Gastrocnemius medialis (tissue), 4 donors: ENCODE measurements at regions of chr2 and their contacts with region 1.

Region 1: DNA sequence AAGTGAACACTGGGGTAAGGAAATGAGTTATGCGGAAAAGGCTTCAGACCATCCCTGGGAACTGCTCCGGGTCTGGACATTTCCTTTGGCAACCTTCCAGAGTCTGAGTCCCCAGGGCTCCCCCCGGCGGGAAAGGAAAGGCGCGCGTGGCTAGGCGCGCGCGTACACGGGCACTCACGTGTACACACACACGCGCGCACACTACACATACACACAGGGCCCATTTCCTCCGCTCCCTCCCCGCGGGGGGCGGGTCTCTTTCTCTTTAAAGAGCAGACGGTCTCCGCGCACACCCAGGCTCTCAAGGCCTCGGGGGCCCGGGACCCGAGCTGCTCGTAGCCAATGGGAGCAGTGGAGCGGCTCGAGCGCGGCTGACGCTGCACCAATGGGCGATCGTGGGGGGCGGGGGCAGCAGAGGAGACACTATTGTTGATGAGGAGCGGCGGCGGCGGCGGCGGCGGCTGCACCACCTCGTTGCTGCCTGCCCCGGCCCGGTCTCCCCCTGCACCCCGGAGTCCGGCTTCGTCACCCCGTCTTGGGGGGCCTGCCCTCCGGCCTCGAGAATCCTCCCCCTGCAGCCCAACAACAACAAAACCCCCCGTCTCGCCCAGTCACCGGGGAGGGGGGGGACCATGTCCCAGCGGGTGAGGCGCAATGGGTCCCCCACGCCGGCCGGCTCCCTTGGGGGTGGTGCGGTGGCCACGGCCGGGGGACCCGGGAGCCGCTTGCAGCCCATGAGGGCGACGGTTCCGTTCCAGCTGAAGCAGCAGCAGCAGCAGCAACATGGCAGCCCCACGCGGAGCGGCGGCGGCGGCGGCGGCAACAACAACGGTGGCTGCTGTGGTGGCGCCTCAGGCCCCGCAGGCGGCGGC is at the start of gene FAM117B:
- DNase-seq: peak; percentile 97
- ATAC-seq: peak; percentile 91 to 93
- H3K4me3 ChIP-seq: peak within 1 kb of the TSS; percentile 95 to 99 (median 97)
- H3K27ac ChIP-seq: peak within 1 kb of the TSS; percentile 94 to 99 (median 97)
- H3K4me1 ChIP-seq: peaks cover 20 to 30% of the 10 kb centered on the region in 2 donors
- H3K27me3 ChIP-seq: no peaks in the 10 kb centered on the region
- CTCF ChIP-seq: peak in 1 of 5 experiments; percentile 15
- POLR2A ChIP-seq: peak; percentile 68 to 91
- total RNA-seq, gene FAM117B: 1.5 to 4.5 (median 2.9) TPM

Region 2: DNA sequence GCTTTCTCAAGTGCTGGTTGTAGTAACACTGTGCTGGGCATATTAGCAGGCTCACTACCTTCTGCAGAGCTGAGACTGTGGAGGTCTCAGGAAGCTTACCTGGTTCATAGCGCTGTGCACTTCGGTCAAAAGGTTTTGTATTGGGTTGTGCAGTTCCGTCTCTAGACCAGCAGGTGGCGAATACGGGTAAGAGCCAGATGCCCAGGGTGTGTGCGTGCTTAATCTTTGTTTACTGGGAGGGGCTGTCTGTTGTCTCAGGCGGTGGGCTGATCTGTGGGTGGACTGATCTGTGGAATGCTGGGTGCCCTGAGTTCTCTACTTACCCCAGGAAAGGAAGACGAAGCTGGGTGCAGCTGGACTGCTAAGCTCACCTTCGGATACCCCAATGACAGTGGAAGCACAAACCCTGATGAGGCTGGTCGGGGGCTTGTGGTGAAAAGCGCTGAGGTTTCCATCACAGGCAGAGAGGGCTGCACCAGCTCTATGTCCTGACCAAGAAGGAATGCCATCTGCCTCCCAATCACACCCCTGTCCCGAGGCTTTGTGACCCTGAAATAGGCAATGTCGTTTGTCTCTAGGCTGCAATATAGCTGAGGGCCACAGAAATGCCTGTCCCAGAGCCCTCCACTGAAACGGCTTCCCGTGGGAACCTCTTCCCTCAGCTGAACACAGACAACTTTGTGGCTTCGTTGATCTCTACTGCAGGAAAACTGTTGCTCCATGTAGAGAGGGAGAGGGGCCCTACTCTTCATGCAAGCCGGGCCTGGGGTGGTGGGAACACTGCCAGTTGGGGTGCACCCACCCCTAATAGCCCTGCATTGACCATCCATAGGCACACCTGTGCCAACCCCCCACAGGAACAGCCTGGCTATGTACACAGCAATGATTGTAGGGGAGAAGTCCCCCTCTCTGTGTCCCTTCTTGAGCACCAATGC is 45.9 kb before region 1 on chr2:
- in situ Hi-C with region 1: no loop called
- intact Hi-C with region 1: loop called (anchors 2 kb)
- DNase-seq: peak; percentile 29 to 52
- ATAC-seq: peak; percentile 85 to 94
- H3K4me3 ChIP-seq: peak overlapping the region; percentile 18 to 60 (median 30)
- H3K27ac ChIP-seq: no peak overlapping the region
- H3K4me1 ChIP-seq: peaks cover 0 to 3% of the 10 kb centered on the region in 2 donors
- H3K27me3 ChIP-seq: no peaks in the 10 kb centered on the region
- CTCF ChIP-seq: peak; percentile 65 to 95 (median 89)
- POLR2A ChIP-seq: no peak

Region 3: GRCh38 chr2:202599105-202599504 is 35.7 kb before region 1 on chr2:
- in situ Hi-C with region 1: no loop called
- intact Hi-C with region 1: no loop called
- DNase-seq: no peak
- ATAC-seq: no peak
- H3K4me3 ChIP-seq: no peak overlapping the region
- H3K27ac ChIP-seq: no peak overlapping the region
- H3K4me1 ChIP-seq: no peaks in the 10 kb centered on the region
- H3K27me3 ChIP-seq: no peaks in the 10 kb centered on the region
- CTCF ChIP-seq: no peak
- POLR2A ChIP-seq: no peak

Region 4: GRCh38 chr2:202801544-202801943 is 166.8 kb after region 1 on chr2:
- in situ Hi-C with region 1: no loop called
- intact Hi-C with region 1: loop called (anchors 2 kb)
- DNase-seq: no peak
- ATAC-seq: no peak
- H3K4me3 ChIP-seq: no peak overlapping the region
- H3K27ac ChIP-seq: peak overlapping the region; percentile 31 to 46 (median 38)
- H3K4me1 ChIP-seq: peaks cover 12 to 22% of the 10 kb centered on the region in 2 donors
- H3K27me3 ChIP-seq: no peaks in the 10 kb centered on the region
- CTCF ChIP-seq: no peak
- POLR2A ChIP-seq: no peak

Region 5: GRCh38 chr2:202911512-202912341 is 276.9 kb after region 1 on chr2 and contains the starts of genes CARF and WDR12:
- in situ Hi-C with region 1: no loop called
- intact Hi-C with region 1: loop called (anchors 5 kb)
- DNase-seq: peak; percentile 87 to 88
- ATAC-seq: peak; percentile 94 to 96
- H3K4me3 ChIP-seq: peak within 1 kb of the TSS; percentile 83 to 100 (median 92)
- H3K27ac ChIP-seq: peak within 1 kb of the TSS; percentile 90 to 99 (median 94)
- H3K4me1 ChIP-seq: peaks cover 25 to 27% of the 10 kb centered on the region in 2 donors
- H3K27me3 ChIP-seq: no peaks in the 10 kb centered on the region
- CTCF ChIP-seq: no peak
- POLR2A ChIP-seq: peak; percentile 41 to 56
- total RNA-seq, gene CARF: 2.2 to 12.2 (median 4.0) TPM
- total RNA-seq, gene WDR12: 5.3 to 83.2 (median 18.7) TPM

Region 6: DNA sequence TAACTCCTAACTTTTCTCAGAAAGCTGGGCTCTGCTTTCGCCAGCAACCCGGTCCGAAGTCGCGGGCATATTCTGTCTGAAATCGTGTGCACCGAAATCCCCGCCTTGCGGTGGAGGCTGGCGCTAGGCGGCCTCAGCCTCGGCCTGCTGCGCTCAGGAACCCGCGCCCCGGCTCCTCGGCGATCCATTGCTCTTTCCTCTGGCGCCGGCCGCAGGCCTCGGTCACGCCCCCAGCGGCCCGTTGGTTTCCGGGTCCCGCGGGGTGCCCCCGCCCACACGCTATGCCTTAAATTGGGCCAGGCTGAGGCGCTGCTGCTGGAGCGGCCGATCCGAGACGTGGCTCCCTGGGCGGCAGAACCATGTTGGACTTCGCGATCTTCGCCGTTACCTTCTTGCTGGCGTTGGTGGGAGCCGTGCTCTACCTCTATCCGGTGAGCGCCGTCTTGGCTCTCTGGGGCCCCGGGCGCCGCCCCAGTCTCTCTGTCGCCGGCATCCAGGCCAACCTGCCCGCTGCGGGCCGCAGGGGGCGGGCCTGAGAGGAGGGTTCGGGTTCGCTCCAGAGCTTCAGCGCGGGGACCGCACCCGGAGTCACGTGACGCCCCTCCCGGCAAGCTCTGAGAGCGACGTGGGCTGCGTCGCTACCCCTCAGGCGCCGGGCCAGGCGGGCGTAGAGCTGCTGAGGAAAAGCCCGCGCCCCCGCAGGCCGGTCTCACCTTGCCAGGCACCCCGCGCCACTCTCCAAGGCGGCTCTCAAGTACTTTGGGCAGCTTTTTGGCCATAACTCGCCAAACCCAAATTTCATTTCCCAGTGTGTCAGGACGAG is 604.1 kb after region 1 on chr2 and contains the start of gene CYP20A1:
- in situ Hi-C with region 1: no loop called
- intact Hi-C with region 1: loop called (anchors 10 kb)
- DNase-seq: peak; percentile 90 to 94
- ATAC-seq: peak; percentile 96
- H3K4me3 ChIP-seq: peak within 1 kb of the TSS; percentile 79 to 97 (median 81)
- H3K27ac ChIP-seq: peak within 1 kb of the TSS; percentile 92 to 99 (median 96)
- H3K4me1 ChIP-seq: peaks cover 12 to 16% of the 10 kb centered on the region in 2 donors
- H3K27me3 ChIP-seq: no peaks in the 10 kb centered on the region
- CTCF ChIP-seq: peak in 4 of 5 experiments; percentile 41 to 55 (median 52)
- POLR2A ChIP-seq: peak; percentile 84 to 88
- total RNA-seq, gene CYP20A1: 12.4 to 24.4 (median 17.7) TPM